GM23248 (cell line): ENCODE measurements at regions of chr17 and their contacts with region 1.

Region 1: DNA sequence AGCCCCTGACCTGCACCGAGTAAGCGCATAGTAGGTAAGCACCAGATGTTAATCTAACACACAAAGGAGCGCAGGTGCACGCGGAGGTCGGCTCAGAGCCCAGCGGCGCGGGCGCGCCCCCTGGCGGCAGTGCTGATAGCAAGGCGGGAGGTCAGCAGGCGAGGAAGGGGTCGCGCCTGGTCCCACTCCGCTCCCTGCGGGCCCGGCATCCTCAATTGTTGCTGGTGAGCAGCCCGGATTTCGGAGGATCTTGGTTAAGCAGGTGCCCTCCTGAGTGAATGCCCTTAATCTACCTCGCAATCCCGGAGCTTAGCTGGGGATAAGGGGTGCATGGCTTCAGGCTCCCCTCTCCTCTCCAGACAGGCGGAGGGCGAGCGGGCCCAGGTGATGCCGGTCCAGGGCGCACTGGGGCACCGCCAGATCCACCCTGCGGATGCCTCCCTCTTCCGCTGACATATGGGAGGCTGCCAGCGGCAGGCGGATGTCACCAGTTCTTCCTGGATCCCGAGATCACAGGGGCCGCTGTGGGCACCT is 4.0 kb upstream of the WNT3 start:
- DNase-seq: no peak
- H3K4me3 ChIP-seq: no peak overlapping the region
- H3K27ac ChIP-seq: no peak overlapping the region
- H3K4me1 ChIP-seq: no peaks in the 10 kb centered on the region
- H3K27me3 ChIP-seq: peaks cover 50% of the 10 kb centered on the region

Region 2: GRCh38 chr17:46770818-46771560 is 51.5 kb before region 1 on chr17:
- in situ Hi-C with region 1: loop called (anchors 10 kb)
- DNase-seq: peak; percentile 83
- H3K4me3 ChIP-seq: peak overlapping the region; percentile 68
- H3K27ac ChIP-seq: peak overlapping the region; percentile 33
- H3K4me1 ChIP-seq: no peaks in the 10 kb centered on the region
- H3K27me3 ChIP-seq: no peaks in the 10 kb centered on the region

Region 3: GRCh38 chr17:47106130-47106529 is 283.7 kb after region 1 on chr17:
- in situ Hi-C with region 1: no loop called
- DNase-seq: no peak
- H3K4me3 ChIP-seq: no peak overlapping the region
- H3K27ac ChIP-seq: no peak overlapping the region
- H3K4me1 ChIP-seq: no peaks in the 10 kb centered on the region
- H3K27me3 ChIP-seq: no peaks in the 10 kb centered on the region